Activated CD4-positive, alpha-beta T cell treated with anti-CD3 and anti-CD28 coated beads for 36 hours (primary cell): ENCODE measurements at regions of chr11 and their contacts with region 1.

Region 1: GRCh38 chr11:118290923-118291322 is 13.6 kb upstream of the CD3E start:
- DNase-seq: peak; percentile 58
- ATAC-seq: peak; percentile 74
- H3K4me3 Mint-ChIP-seq: no peak overlapping the region
- H3K27ac Mint-ChIP-seq: peak overlapping the region; percentile 8
- H3K4me1 Mint-ChIP-seq: peaks cover 26% of the 10 kb centered on the region
- H3K27me3 Mint-ChIP-seq: no peaks in the 10 kb centered on the region

Region 2: DNA sequence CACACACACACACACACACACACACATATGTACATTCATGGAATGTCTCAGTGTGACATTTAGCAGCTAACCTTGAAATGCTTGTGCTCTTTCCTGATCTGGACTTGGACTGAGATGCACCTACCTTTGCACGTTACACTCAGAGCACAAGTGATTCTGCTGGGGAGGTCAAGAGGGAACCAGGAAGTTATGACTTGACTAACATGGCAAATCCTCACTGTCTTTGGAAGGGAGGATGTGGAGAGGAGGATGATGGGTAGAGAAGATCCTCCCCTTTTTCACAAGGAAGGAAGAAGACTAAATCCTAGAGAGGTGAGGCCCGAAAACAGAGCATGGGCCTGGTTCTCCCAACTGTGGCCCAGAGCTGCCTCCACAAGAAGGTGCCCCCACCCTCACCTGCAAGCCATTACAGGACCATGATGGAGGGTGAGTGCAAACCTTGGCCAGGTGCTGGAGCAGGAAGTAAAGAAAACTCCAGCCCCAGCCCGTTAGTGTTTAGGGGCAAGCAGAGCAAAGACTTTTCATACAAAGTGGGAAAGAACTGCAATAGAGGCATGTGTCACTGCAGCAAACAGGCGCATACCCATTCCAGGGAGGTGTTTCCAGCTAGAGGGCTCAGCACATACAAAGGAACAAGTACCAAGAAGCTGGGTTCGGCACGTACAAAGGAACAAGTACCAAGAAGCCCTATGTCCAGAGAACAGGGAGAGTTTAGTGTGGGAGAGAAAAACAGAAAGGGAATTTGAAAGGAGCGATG is 164.7 kb before region 1 on chr11:
- CTCF ChIA-PET with region 1: no interaction called
- POLR2A ChIA-PET with region 1: interaction called, 15 read pairs
- intact Hi-C with region 1: no loop called
- DNase-seq: peak; percentile 20
- ATAC-seq: peak; percentile 78
- H3K4me3 Mint-ChIP-seq: no peak overlapping the region
- H3K27ac Mint-ChIP-seq: no peak overlapping the region
- H3K4me1 Mint-ChIP-seq: no peaks in the 10 kb centered on the region
- H3K27me3 Mint-ChIP-seq: peaks cover 2% of the 10 kb centered on the region

Region 3: GRCh38 chr11:118171269-118172062 is 119.5 kb before region 1 on chr11:
- CTCF ChIA-PET with region 1: interaction called, 12 read pairs
- POLR2A ChIA-PET with region 1: no interaction called
- intact Hi-C with region 1: no loop called
- DNase-seq: peak; percentile 91
- ATAC-seq: peak; percentile 95
- H3K4me3 Mint-ChIP-seq: no peak overlapping the region
- H3K27ac Mint-ChIP-seq: no peak overlapping the region
- H3K4me1 Mint-ChIP-seq: no peaks in the 10 kb centered on the region
- H3K27me3 Mint-ChIP-seq: peaks cover 6% of the 10 kb centered on the region

Region 4: DNA sequence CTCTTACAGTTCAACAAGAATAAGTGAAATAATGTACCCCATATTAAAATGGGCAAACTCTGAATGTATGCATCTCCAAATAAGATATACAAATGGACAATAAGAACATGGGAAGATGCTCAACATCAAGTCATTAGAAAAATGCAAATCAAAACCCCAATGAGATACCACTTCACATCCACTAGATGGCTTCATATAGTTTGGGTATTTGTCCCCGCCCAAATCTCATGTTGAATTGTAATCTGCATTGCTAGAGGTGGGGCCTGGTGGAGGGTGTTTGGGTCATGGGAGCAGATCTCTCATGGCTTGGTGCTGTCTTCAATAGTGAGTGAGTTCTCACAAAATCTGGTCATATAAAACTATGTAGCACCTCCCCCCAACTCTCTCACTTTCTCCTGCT is 32.5 kb before region 1 on chr11:
- CTCF ChIA-PET with region 1: interaction called, 7 read pairs
- POLR2A ChIA-PET with region 1: no interaction called
- intact Hi-C with region 1: loop called in 1 of 2 experiments (anchors 2 kb)
- DNase-seq: peak; percentile 33
- ATAC-seq: peak; percentile 70
- H3K4me3 Mint-ChIP-seq: no peak overlapping the region
- H3K27ac Mint-ChIP-seq: no peak overlapping the region
- H3K4me1 Mint-ChIP-seq: peaks cover 42% of the 10 kb centered on the region
- H3K27me3 Mint-ChIP-seq: no peaks in the 10 kb centered on the region